A549 (cell line): ENCODE measurements at regions of chr20 and their contacts with region 1.

Region 1: DNA sequence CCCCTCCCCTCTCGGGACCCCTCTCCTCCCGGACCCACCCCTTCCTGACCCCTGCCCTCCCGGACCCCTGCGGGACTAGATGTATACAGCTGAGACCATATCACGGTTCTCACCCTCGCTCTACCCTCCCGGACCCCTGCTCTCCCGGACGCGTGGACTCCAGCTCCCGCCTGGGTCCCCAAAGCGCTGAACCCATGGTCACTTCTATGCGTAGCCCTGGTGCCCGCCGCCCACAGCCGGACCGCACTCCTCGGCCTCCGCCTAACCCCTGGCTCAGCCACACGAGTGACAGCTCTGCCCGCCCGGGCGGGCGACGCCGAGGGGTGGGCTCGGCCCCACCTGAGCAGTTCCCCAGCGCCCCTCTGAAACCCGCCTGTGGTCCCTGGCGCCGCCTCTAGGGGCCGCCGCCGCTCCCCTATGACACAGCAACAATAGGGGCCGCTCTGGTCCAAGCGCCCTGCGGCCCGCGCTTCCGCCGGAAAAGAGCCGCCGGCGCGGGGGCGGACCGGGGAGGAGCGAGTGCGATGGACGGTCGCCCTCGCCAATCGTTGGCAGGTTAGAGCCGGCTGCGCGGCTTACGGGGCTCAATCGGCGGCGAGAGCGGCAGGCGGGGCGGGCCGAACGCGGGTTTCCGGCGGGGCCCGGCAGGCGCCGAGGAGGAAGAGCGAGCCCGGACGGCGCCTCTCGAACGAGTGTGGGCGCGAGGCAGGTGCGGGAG is at the start of gene ADRM1:
- DNase-seq: peak; percentile 95 to 97
- ATAC-seq: peak; percentile 50 to 83
- H3K4me3 ChIP-seq: peak within 1 kb of the TSS; percentile 99
- H3K27ac ChIP-seq: peak within 1 kb of the TSS; percentile 97 to 99
- H3K4me1 ChIP-seq: peaks cover 34% of the 10 kb centered on the region
- CTCF ChIP-seq: peak; percentile 81
- EP300 ChIP-seq: no peak
- POLR2A ChIP-seq: peak; percentile 43
- RAD21 ChIP-seq: peak; percentile 48
- polyA plus RNA-seq, gene ADRM1: 68.9 and 87.9 TPM in 2 replicates

Region 2: DNA sequence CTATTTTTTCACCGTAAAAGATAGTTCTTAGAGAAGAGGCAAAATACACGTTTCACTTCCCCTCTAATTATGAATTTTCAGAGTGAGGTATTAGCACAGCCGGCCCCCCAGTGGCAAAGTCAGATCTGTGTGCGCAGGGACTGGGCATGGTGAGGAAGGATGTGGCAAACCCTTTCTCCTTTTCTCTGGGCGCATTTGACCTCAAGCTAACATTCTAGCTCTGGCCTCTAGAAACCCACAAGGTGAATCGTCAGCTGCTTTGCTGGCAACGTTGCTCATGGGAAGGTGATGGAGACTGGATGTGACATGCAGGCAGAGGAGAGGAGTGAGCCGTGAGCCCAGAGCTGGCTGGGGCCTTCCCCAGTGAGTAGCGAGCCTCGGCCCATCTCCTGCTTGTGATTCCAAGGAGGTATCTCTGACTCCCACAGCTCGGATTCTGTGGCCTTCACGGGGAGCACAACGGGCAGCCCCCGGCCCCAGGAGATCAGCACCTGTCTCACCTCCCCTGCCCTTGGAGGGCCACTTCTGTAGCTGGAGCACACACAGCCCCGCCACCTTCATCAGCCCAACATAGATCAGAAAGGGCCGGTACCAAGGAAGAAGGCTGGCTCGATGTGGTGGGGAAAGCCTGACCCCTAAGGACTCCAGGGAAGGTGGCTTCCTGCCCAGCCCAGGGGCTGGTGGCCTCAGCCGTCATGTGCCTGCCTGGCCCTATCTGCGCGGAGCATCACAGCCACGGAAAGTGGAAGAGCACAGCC is 389.7 kb before region 1 on chr20:
- CTCF ChIA-PET with region 1: no interaction called
- POLR2A ChIA-PET with region 1: no interaction called
- DNase-seq: no peak
- ATAC-seq: no peak
- H3K4me3 ChIP-seq: no peak overlapping the region
- H3K27ac ChIP-seq: no peak overlapping the region
- H3K4me1 ChIP-seq: no peaks in the 10 kb centered on the region
- CTCF ChIP-seq: no peak
- EP300 ChIP-seq: no peak
- POLR2A ChIP-seq: no peak
- RAD21 ChIP-seq: no peak

Region 3: DNA sequence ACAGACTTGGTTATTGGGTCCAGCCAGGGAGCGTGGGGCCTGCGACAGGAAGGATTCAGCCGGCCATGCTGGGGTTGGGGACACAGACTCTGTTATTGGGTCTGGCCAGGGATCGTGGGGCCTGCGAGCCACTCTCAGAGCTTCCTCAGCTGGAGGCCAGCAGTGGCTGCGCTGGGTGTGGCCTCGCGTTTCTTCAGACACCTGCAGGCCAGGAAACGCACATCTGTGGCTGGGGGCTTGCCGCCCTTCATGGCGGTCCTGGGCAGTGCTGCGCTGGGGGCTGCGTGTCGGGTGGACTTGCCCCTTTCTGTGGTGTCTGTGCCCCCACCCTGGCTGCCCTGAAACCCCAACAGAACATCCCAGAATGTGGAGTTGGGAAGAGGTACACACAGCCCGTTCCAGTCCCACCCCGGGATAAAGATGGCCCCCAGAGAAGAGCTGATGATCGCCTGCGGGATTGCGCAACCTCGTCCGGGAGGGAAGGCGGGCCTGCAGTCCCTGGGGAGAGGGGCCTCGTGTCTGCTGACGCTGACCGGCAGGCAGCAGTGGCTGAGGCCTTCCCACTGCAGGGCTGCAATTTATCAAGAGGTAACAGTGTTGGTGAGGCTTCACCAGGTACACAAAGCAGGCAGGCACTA is 136.6 kb before region 1 on chr20:
- CTCF ChIA-PET with region 1: no interaction called
- POLR2A ChIA-PET with region 1: no interaction called
- DNase-seq: no peak
- ATAC-seq: no peak
- H3K4me3 ChIP-seq: no peak overlapping the region
- H3K27ac ChIP-seq: no peak overlapping the region
- H3K4me1 ChIP-seq: no peaks in the 10 kb centered on the region
- CTCF ChIP-seq: no peak
- EP300 ChIP-seq: no peak
- POLR2A ChIP-seq: no peak
- RAD21 ChIP-seq: no peak

Region 4: GRCh38 chr20:62318400-62319345 is 16.2 kb after region 1 on chr20:
- CTCF ChIA-PET with region 1: interaction called, 23 read pairs
- POLR2A ChIA-PET with region 1: no interaction called
- DNase-seq: peak in 1 of 2 experiments; percentile 58
- ATAC-seq: peak; percentile 14 to 29; a peak in 5 of 6 replicates
- H3K4me3 ChIP-seq: no peak overlapping the region
- H3K27ac ChIP-seq: peak overlapping the region in 1 of 2 experiments; percentile 70; a peak in 2 of 6 replicates
- H3K4me1 ChIP-seq: peaks cover 11% of the 10 kb centered on the region; the same call in 2 of the 3 replicates
- CTCF ChIP-seq: no peak
- EP300 ChIP-seq: no peak
- POLR2A ChIP-seq: no peak
- RAD21 ChIP-seq: no peak

Region 5: GRCh38 chr20:62362981-62363919 is 60.8 kb after region 1 on chr20:
- CTCF ChIA-PET with region 1: interaction called, 42 read pairs
- POLR2A ChIA-PET with region 1: interaction called, 4 read pairs
- DNase-seq: peak in 1 of 2 experiments; percentile 80
- ATAC-seq: no peak
- H3K4me3 ChIP-seq: peak overlapping the region; percentile 100
- H3K27ac ChIP-seq: peak overlapping the region; percentile 97 to 99
- H3K4me1 ChIP-seq: peaks cover 66% of the 10 kb centered on the region
- CTCF ChIP-seq: 0 out of 3 replicates have a peak, but pooled peaks have one; percentile 6
- EP300 ChIP-seq: 0 out of 5 replicates have a peak, but pooled peaks of 1 of the 2 experiments have one; percentile 14
- POLR2A ChIP-seq: no peak
- RAD21 ChIP-seq: 0 out of 5 replicates have a peak, but pooled peaks of 1 of the 2 experiments have one; percentile 14

Region 6: GRCh38 chr20:62376112-62377063 is 73.9 kb after region 1 on chr20:
- CTCF ChIA-PET with region 1: interaction called, 93 read pairs
- POLR2A ChIA-PET with region 1: interaction called, 3 read pairs
- DNase-seq: peak in 1 of 2 experiments; percentile 81
- ATAC-seq: peak; percentile 70 to 85
- H3K4me3 ChIP-seq: no peak overlapping the region
- H3K27ac ChIP-seq: peak overlapping the region; percentile 81 to 94
- H3K4me1 ChIP-seq: peaks cover 75% of the 10 kb centered on the region
- CTCF ChIP-seq: peak; percentile 62
- EP300 ChIP-seq: no peak
- POLR2A ChIP-seq: no peak
- RAD21 ChIP-seq: peak; percentile 69 to 79